Esophagus muscularis mucosa (tissue), 4 donors: ENCODE measurements at regions of chr15 and their contacts with region 1.

Region 1: GRCh38 chr15:57751177-57751800 is 44.8 kb downstream of the POLR2M start:
- DNase-seq: no peak
- H3K4me3 ChIP-seq: no peak overlapping the region
- H3K27ac ChIP-seq: no peak overlapping the region
- H3K4me1 ChIP-seq: peaks cover 0 to 16% (median 14%) of the 10 kb centered on the region in 4 donors
- H3K27me3 ChIP-seq: no peaks in the 10 kb centered on the region
- CTCF ChIP-seq: peak; percentile 38 to 52 (median 39)
- EP300 ChIP-seq: no peak
- POLR2A ChIP-seq: no peak

Region 2: GRCh38 chr15:57685306-57686095 is 65.8 kb before region 1 on chr15:
- intact Hi-C with region 1: no loop called
- DNase-seq: no peak
- H3K4me3 ChIP-seq: no peak overlapping the region
- H3K27ac ChIP-seq: peak overlapping the region; percentile 78 to 83 (median 81)
- H3K4me1 ChIP-seq: peaks cover 49 to 62% (median 56%) of the 10 kb centered on the region in 4 donors
- H3K27me3 ChIP-seq: no peaks in the 10 kb centered on the region
- CTCF ChIP-seq: no peak
- EP300 ChIP-seq: no peak
- POLR2A ChIP-seq: no peak

Region 3: DNA sequence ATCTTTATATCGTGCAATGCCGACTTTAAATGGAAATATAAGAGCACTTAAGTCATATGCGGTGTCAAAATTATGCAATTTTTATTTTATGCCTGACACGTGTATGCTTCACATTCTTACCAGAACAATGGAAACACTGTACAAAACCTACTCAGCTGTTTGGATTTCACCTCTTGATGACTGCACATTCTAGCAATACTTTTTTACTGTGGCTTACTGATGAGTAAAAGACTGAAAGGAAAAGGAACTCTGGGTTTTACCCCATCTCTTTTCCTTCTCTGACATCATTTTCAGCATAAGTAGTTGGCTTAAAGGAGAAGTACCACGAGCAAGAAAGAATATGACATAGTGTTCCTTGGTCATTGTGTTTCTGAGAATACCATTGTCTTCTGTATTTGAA is 98.0 kb after region 1 on chr15:
- intact Hi-C with region 1: loop called (anchors 5 kb)
- DNase-seq: no peak
- H3K4me3 ChIP-seq: no peak overlapping the region
- H3K27ac ChIP-seq: no peak overlapping the region
- H3K4me1 ChIP-seq: no peaks in the 10 kb centered on the region
- H3K27me3 ChIP-seq: peaks cover 0 to 9% (median 0%) of the 10 kb centered on the region in 4 donors
- CTCF ChIP-seq: no peak
- EP300 ChIP-seq: no peak
- POLR2A ChIP-seq: no peak